Activated CD4-positive, alpha-beta T cell treated with anti-CD3 and anti-CD28 coated beads for 36 hours (primary cell): ENCODE measurements at regions of chr6 and their contacts with region 1.

Region 1: GRCh38 chr6:139134817-139135581 is at the start of gene HECA:
- DNase-seq: peak; percentile 100
- ATAC-seq: peak; percentile 70
- H3K4me3 Mint-ChIP-seq: peak within 1 kb of the TSS; percentile 93
- H3K27ac Mint-ChIP-seq: peak within 1 kb of the TSS; percentile 98
- H3K4me1 Mint-ChIP-seq: peaks cover 49% of the 10 kb centered on the region
- H3K27me3 Mint-ChIP-seq: no peaks in the 10 kb centered on the region
- total RNA-seq, gene HECA: 51.6 to 63.4 TPM

Region 2: GRCh38 chr6:138773177-138774091 is 361.6 kb before region 1 on chr6 and contains the start of gene CCDC28A:
- CTCF ChIA-PET with region 1: no interaction called
- POLR2A ChIA-PET with region 1: no interaction called
- intact Hi-C with region 1: loop called in 1 of 2 experiments (anchors 5 kb)
- DNase-seq: peak; percentile 95
- ATAC-seq: peak; percentile 91
- H3K4me3 Mint-ChIP-seq: peak within 1 kb of the TSS; percentile 84
- H3K27ac Mint-ChIP-seq: peak within 1 kb of the TSS; percentile 98
- H3K4me1 Mint-ChIP-seq: peaks cover 31% of the 10 kb centered on the region
- H3K27me3 Mint-ChIP-seq: no peaks in the 10 kb centered on the region
- total RNA-seq, gene CCDC28A: 14.8 to 16.8 TPM

Region 3: DNA sequence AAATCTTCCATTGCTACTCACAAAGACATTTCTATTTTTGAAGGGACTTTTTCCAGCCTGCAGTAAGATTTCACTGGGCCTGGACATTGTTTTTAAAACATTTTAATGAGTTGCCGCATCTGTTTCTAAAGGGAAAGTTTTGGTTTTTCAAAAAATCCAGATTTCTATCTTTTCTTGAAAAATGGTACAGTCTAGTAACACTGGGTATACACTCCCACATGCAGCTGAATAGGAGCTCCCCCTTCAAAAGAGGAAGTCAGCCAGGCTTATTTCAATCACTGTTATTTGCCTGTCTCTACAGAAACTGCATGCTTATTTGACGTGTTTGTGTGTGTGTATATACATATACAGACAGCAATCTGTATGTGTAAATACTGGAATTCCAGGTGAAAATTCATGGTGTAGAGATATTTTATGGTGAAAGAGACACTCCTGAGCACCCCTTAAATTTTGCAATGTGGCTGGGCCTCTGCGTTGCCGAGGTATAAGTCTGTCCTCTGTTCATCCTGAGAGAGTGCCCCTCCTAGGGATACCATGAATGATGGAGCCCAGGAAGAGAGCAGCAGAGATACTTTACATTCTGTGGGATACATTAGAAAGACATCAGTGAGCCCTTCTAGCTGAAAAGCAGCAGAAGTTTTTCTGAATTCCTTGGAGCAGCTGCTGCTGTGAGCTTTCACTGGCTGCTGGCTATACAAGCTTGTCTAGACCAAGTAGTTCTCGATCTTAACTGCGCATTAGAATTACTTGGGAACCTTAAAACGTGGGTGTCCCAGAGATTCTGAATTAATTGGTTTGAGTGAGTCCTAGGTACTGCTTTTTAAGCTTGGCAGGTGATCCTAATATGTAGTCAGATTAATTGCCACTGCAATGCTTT is 118.4 kb before region 1 on chr6:
- CTCF ChIA-PET with region 1: no interaction called
- POLR2A ChIA-PET with region 1: no interaction called
- intact Hi-C with region 1: no loop called
- DNase-seq: no peak
- ATAC-seq: no peak
- H3K4me3 Mint-ChIP-seq: no peak overlapping the region
- H3K27ac Mint-ChIP-seq: no peak overlapping the region
- H3K4me1 Mint-ChIP-seq: no peaks in the 10 kb centered on the region
- H3K27me3 Mint-ChIP-seq: no peaks in the 10 kb centered on the region

Region 4: DNA sequence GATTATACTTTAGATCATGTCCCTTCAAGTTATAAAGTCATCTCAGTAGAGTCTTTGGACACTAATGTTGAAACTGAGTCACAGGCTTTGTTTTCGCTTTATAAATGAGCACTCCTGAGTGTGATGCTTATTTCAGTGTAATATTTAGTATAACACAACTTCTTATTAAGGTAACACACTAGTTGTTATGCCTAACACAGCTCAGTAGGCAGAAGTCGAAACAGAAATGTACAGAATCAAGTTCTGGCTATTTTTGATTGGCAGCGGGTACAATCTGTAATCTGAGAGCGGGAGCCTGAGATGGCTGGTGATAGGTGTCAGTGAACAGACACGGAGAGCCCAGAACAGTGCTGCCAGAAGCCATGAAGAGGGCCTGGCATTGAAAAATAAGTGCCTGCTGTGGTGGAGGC is 11.3 kb after region 1 on chr6:
- CTCF ChIA-PET with region 1: interaction called, 24 read pairs
- POLR2A ChIA-PET with region 1: interaction called, 13 read pairs
- intact Hi-C with region 1: loop called (anchors 1 kb)
- DNase-seq: peak; percentile 60
- ATAC-seq: peak; percentile 71
- H3K4me3 Mint-ChIP-seq: peak overlapping the region; percentile 53
- H3K27ac Mint-ChIP-seq: peak overlapping the region; percentile 99
- H3K4me1 Mint-ChIP-seq: peaks cover 96% of the 10 kb centered on the region
- H3K27me3 Mint-ChIP-seq: no peaks in the 10 kb centered on the region

Region 5: DNA sequence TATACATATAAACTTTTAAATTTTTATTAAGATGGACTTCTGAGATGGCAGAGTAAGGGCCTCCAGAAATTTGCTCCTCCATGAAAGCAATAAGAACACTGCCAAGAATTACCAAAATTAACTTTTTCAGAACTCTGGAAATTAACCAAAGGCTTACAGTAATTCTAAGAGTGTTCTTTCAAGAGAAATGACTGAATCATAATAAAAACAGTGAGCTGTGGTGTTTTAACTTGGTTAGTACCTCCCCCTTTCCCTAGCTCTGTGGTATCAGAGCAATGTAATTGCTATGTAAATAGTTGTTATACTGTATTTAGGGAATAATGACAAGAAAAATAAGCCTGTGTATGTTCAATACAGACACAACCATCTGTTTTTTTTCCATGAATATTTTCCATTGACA is 18.9 kb after region 1 on chr6:
- CTCF ChIA-PET with region 1: interaction called, 9 read pairs
- POLR2A ChIA-PET with region 1: interaction called, 7 read pairs
- intact Hi-C with region 1: loop called (anchors 1 to 2 kb)
- DNase-seq: no peak
- ATAC-seq: peak; percentile 47
- H3K4me3 Mint-ChIP-seq: peak overlapping the region; percentile 30
- H3K27ac Mint-ChIP-seq: peak overlapping the region; percentile 100
- H3K4me1 Mint-ChIP-seq: peaks cover 82% of the 10 kb centered on the region
- H3K27me3 Mint-ChIP-seq: no peaks in the 10 kb centered on the region

Region 6: DNA sequence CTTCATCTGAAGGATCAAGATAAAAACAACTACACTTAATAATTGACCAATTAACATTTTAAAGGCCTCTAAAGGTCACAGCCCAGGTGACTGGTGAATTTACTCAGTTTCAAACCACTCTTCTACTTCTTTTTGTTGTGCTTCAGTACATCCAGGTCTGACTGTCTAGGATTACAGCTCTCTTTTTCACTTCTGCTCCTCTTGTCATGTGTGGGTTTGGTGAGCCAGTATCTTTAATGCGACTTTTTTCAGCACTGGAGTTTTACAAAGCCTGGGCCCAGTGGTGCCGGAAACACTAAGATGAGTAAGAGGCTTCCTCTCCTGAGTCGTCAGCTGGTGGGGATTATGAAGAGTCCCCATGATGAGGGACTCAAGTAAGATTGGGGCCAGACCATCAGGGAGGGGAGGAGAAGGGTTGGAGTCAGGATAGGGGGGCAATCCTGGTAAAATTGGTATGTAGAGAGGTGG is 26.9 kb after region 1 on chr6:
- CTCF ChIA-PET with region 1: interaction called, 9 read pairs
- POLR2A ChIA-PET with region 1: interaction called, 12 read pairs
- intact Hi-C with region 1: no loop called
- DNase-seq: peak; percentile 85
- ATAC-seq: peak; percentile 86
- H3K4me3 Mint-ChIP-seq: peak overlapping the region; percentile 59
- H3K27ac Mint-ChIP-seq: peak overlapping the region; percentile 97
- H3K4me1 Mint-ChIP-seq: peaks cover 91% of the 10 kb centered on the region
- H3K27me3 Mint-ChIP-seq: no peaks in the 10 kb centered on the region

Region 7: GRCh38 chr6:139173172-139173571 is 38.2 kb after region 1 on chr6:
- CTCF ChIA-PET with region 1: interaction called, 3 read pairs
- POLR2A ChIA-PET with region 1: interaction called, 8 read pairs
- intact Hi-C with region 1: loop called (anchors 2 kb)
- DNase-seq: no peak
- ATAC-seq: peak; percentile 89
- H3K4me3 Mint-ChIP-seq: no peak overlapping the region
- H3K27ac Mint-ChIP-seq: peak overlapping the region; percentile 87
- H3K4me1 Mint-ChIP-seq: peaks cover 91% of the 10 kb centered on the region
- H3K27me3 Mint-ChIP-seq: no peaks in the 10 kb centered on the region

Region 8: DNA sequence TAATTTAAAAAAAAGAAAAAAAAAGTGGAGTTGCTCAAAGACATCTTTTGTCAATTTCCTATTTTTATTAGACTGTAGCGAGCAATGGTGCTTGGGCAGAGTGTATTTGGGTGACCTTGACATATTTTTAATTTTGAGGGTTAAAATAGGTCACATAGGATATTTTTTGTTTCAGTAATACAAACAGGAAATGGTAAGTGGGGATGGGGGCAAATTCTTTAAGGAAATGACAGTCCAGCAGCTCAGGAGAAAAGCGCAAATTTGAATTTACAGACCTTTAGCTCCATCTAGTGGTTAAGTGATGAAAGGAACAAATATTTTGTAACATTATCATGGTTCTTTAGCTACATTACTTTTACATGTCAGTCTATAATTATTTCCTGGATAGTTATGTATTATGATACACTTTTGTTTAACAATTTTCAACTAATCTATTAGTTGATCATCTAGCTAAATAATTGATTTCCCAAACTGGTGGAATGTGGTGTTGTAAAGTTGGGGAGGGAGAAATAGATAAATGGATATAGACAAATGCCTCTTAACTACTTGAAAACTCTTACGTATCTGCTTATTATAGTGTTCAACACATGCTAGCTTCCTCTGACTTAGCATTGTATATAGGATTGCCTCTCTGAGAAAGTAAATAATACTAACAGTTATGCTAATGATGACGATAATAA is 229.4 kb after region 1 on chr6:
- CTCF ChIA-PET with region 1: interaction called, 10 read pairs
- POLR2A ChIA-PET with region 1: interaction called, 5 read pairs
- intact Hi-C with region 1: no loop called
- DNase-seq: no peak
- ATAC-seq: peak; percentile 57
- H3K4me3 Mint-ChIP-seq: no peak overlapping the region
- H3K27ac Mint-ChIP-seq: no peak overlapping the region
- H3K4me1 Mint-ChIP-seq: peaks cover 25% of the 10 kb centered on the region
- H3K27me3 Mint-ChIP-seq: no peaks in the 10 kb centered on the region